ENCODE measurements at regions of chr9 and their contacts with region 1.

Region 1: GRCh38 chr9:137188490-137189296 is at the starts of genes ANAPC2 and SSNA1:
- DNase-seq: peak; percentile 83 to 95 (median 94)
- ATAC-seq: peak; percentile 79
- H3K4me3 Mint-ChIP-seq: peak within 1 kb of the TSS; percentile 87 to 96 (median 92)
- H3K27ac Mint-ChIP-seq: peak within 1 kb of the TSS; percentile 83 to 98 (median 94)
- H3K4me1 Mint-ChIP-seq: peaks cover 8 to 50% (median 41%) of the 10 kb centered on the region in 4 donors
- H3K27me3 Mint-ChIP-seq: no peaks in the 10 kb centered on the region
- polyA plus RNA-seq, gene ANAPC2: 3.4 to 5.9 (median 4.3) TPM
- polyA plus RNA-seq, gene SSNA1: 97.8 to 123 (median 119) TPM

Region 2: DNA sequence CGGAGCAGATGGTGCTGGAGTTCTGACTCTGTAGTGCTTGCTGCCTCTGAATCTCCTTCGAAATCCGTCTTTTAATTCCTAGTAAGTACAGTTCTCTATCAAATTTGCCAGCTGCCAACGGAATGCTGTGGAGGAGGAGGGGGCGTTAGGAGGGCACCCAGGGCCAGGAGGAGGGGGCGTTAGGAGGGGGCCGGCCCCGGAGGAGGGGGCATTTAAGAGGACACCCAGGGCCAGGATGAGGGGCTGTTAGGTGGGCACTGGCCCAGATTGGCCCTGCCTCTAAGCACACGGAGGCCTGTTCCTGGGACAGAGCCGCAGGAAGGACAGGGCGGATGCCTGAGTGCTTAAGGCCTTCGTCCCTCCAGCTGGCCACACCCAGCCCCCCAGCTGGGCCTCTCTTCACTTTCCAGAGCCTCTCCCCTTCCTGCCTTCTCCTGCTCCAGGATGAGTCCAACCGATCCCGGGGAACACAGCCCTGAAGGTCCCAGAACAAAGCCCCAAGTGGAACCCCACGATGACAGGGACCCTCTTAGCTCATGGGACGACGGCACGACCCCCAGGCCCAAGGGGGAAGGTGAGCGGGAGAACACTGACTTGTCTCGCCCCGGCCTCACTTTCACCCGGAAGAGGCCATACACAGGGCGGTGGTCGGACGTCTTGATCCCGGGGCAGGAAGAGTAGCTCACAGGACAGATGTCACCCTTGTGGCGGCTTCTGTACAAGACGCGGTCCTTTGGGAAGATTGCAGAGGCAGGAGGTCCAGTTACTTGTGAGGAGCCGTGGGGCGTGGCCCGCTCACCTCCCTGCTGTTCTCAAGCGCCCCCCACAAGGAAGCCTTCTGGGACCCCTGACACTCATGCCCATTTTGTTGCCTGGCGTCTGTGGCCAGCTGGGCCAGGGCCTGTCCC is 758.8 kb before region 1 on chr9:
- POLR2A ChIA-PET with region 1: interaction called, 12 read pairs
- DNase-seq: no peak
- ATAC-seq: no peak
- H3K4me3 Mint-ChIP-seq: no peak overlapping the region
- H3K27ac Mint-ChIP-seq: peak overlapping the region in 2 of 10 donors; percentile 29 to 40
- H3K4me1 Mint-ChIP-seq: no peaks in the 10 kb centered on the region
- H3K27me3 Mint-ChIP-seq: no peaks in the 10 kb centered on the region

Region 3: GRCh38 chr9:137095664-137096517 is 92.8 kb before region 1 on chr9:
- POLR2A ChIA-PET with region 1: interaction called, 11 read pairs
- DNase-seq: peak; percentile 77 to 93 (median 88)
- ATAC-seq: peak; percentile 99
- H3K4me3 Mint-ChIP-seq: peak overlapping the region; percentile 81 to 90 (median 87)
- H3K27ac Mint-ChIP-seq: peak overlapping the region; percentile 91 to 97 (median 97)
- H3K4me1 Mint-ChIP-seq: peaks cover 7 to 21% (median 17%) of the 10 kb centered on the region in 4 donors
- H3K27me3 Mint-ChIP-seq: no peaks in the 10 kb centered on the region

Region 4: DNA sequence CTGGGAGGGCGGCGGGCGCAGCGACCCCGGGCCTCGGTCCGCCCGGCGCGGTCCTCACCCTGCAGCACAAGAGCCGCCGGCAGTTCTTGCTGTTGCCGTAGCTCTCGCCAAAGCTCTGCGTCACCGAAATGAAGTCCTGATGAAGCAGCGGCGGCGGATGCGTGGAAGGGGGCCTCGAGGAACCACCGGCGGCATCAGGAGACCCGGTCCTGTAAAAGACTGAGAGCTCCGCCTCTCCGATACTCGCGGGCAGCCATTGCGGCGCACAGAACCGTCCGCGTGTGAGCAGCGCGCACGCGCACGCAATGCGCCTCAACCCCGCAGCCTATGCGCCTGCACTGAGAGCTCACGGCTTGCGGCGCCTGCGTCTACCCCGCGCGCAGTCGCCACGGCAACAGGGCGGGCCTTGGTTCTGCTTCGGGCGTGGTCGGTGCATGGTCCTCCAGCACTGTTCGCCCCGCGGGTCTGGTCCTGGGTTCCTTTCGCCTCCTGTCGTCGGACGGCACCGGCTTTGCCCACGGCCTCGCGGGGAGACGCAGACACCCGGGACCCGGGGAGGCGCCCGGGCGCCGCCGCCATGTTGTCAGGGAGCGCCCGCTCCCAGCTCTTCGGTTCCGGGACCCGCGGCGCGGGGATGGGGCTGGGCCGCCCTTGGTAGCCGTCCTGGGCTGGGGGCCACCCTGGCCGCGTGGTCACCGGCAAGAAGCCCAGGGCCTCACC is 59.1 kb before region 1 on chr9:
- POLR2A ChIA-PET with region 1: interaction called, 10 read pairs
- DNase-seq: peak; percentile 82 to 93 (median 88)
- ATAC-seq: peak; percentile 92 to 95
- H3K4me3 Mint-ChIP-seq: peak overlapping the region; percentile 78 to 95 (median 88)
- H3K27ac Mint-ChIP-seq: peak overlapping the region; percentile 71 to 94 (median 84)
- H3K4me1 Mint-ChIP-seq: peaks cover 17 to 30% (median 28%) of the 10 kb centered on the region in 4 donors
- H3K27me3 Mint-ChIP-seq: peaks cover 0 to 10% (median 2%) of the 10 kb centered on the region in 5 donors

Region 5: DNA sequence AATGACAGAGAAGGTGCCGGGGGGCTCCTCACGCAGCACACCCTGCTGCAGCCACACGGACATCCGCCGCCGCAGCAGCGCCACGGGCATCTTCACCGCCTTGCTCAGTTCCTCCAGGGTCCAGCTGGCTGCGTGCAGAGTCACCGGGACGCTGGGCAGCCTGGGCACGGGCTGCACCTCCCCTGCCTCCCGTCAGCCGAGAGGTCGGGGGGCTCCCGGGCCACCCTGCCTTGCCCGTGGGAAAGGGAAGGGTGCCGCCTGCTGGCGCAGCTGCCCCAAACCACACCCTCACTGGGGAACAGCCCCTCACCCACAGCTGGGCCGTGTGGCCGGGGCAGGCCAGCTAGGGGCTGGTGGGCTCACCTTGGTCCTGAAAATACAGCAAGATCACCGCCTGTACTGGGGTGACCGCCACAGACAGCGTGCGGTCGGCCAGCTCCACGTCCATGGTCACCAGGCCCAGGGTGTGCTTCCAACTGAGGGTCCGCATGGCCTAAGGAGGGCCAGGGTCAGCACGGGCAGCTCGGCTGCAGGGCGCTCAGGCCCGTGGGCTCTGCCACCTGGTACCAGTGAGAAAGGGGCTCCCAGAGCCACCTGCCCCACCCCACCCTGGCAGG is 13.2 kb before region 1 on chr9:
- POLR2A ChIA-PET with region 1: interaction called, 11 read pairs
- DNase-seq: no peak
- ATAC-seq: peak in 1 of 2 donors; percentile 24
- H3K4me3 Mint-ChIP-seq: peak overlapping the region in 4 of 10 donors; percentile 18 to 39 (median 26)
- H3K27ac Mint-ChIP-seq: no peak overlapping the region
- H3K4me1 Mint-ChIP-seq: peaks cover 0 to 13% (median under 1%) of the 10 kb centered on the region in 4 donors
- H3K27me3 Mint-ChIP-seq: peaks cover 0 to 8% (median 0%) of the 10 kb centered on the region in 5 donors

Region 6: GRCh38 chr9:137200311-137201204 is 11.9 kb after region 1 on chr9 and contains the start of gene TPRN:
- POLR2A ChIA-PET with region 1: interaction called, 135 read pairs
- DNase-seq: peak; percentile 94 to 99 (median 98)
- ATAC-seq: peak; percentile 93 to 95
- H3K4me3 Mint-ChIP-seq: peak within 1 kb of the TSS; percentile 76 to 92 (median 85)
- H3K27ac Mint-ChIP-seq: peak within 1 kb of the TSS; percentile 48 to 90 (median 80)
- H3K4me1 Mint-ChIP-seq: peaks cover 9 to 39% (median 22%) of the 10 kb centered on the region in 4 donors
- H3K27me3 Mint-ChIP-seq: no peaks in the 10 kb centered on the region
- polyA plus RNA-seq, gene TPRN: 0.15 to 0.42 (median 0.39) TPM

Region 7: GRCh38 chr9:137223078-137223970 is 34.6 kb after region 1 on chr9:
- POLR2A ChIA-PET with region 1: interaction called, 59 read pairs
- DNase-seq: peak; percentile 95 to 100 (median 98)
- ATAC-seq: peak; percentile 90 to 93
- H3K4me3 Mint-ChIP-seq: peak overlapping the region; percentile 73 to 89 (median 82)
- H3K27ac Mint-ChIP-seq: peak overlapping the region; percentile 60 to 92 (median 82)
- H3K4me1 Mint-ChIP-seq: peaks cover 5 to 14% (median 12%) of the 10 kb centered on the region in 4 donors
- H3K27me3 Mint-ChIP-seq: peaks cover 2 to 10% (median 3%) of the 10 kb centered on the region in 5 donors